ENCODE measurements at regions of chr12 and their contacts with region 1.

Region 1: GRCh38 chr12:5988659-5989116 is 43.6 kb upstream of the ANO2 start:
- DNase-seq: peak; percentile 43
- H3K4me3 ChIP-seq: no peak overlapping the region
- H3K27ac ChIP-seq: no peak overlapping the region
- H3K27me3 ChIP-seq: peaks cover 17% of the 10 kb centered on the region
- CTCF ChIP-seq: peak; percentile 99

Region 2: DNA sequence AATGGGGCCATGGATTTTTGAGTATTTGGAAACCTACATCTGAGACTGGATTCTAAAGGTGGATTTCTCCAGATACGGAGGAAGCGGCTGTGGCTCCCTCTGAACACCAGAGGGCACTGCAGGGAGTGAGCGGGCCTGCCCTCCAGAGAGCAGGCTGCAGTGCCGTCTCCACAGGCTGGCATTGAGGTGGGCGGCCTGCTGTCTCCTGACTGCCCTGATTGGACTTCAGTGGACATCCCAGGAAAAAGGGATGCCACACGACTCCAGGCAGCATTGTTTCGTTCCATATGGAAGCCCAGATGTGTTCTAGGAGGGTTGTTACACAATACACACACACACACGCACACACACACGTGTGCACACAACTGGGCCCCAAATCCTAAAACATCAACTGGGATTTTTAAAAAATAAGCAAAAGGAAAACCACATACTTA is 22.7 kb before region 1 on chr12:
- CTCF ChIA-PET with region 1: interaction called, 16 read pairs
- POLR2A ChIA-PET with region 1: no interaction called
- DNase-seq: peak; percentile 10
- H3K4me3 ChIP-seq: no peak overlapping the region
- H3K27ac ChIP-seq: no peak overlapping the region
- H3K27me3 ChIP-seq: peaks cover 14% of the 10 kb centered on the region
- CTCF ChIP-seq: peak; percentile 88

Region 3: DNA sequence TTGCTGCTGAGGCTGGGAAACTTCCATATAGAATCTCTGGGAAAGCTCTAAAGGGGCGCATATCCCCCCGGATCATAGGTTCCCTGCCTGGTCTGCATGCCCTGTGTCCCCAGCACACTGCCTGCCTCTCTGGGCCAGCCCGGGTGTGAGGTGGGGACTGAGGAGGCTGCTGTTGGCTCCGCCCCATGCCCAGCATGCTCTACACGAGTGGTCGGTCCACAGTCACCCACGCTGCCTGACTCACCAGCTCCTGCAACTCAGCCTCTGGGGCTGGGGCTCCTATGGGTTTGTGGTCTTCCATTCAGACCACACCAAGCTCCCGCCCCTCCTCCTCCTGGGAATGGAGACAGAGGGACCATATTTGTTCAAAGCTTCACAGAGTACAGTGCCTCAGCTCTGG is 44.9 kb after region 1 on chr12:
- CTCF ChIA-PET with region 1: interaction called, 295 read pairs
- POLR2A ChIA-PET with region 1: interaction called, 3 read pairs
- DNase-seq: no peak
- H3K4me3 ChIP-seq: no peak overlapping the region
- H3K27ac ChIP-seq: no peak overlapping the region
- H3K27me3 ChIP-seq: no peaks in the 10 kb centered on the region
- CTCF ChIP-seq: no peak

Region 4: DNA sequence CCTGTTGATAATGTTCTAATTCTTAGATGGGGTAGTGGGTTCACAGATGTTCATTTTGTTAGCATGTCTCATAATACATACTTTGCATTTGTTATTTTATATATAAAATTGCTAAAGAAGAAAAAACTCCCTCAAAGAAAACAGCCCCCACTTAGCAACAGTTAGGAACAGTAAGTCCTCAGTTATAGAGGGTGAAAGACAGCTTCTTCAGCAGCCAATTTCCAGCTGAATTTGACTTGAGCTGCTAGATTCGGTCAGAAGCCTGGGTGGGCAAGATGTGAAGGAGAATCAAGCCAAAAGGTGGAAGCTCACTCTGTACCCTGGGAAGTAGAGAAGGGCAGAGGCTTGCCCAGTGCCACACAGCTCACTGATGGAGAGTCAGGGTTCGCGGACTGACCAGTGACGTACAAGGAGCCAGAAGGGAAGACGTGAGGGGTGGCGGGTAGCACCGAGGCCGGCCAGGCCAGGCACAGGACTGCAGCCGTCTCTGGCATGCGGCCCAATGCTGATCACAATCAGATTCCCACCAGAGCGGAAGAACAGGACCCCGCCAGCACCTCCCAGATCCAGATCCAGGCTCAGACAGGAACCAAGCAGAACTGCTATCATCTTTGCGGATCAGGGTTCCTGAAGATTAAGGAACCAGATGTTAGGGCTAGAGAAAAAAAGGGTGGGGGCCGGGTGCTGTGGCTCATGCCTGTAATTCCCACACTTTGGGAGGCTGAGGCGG is 166.2 kb after region 1 on chr12:
- CTCF ChIA-PET with region 1: no interaction called
- POLR2A ChIA-PET with region 1: no interaction called
- DNase-seq: no peak
- H3K4me3 ChIP-seq: no peak overlapping the region
- H3K27ac ChIP-seq: no peak overlapping the region
- H3K27me3 ChIP-seq: no peaks in the 10 kb centered on the region
- CTCF ChIP-seq: no peak

Region 5: GRCh38 chr12:6278439-6279255 is 290.0 kb after region 1 on chr12:
- CTCF ChIA-PET with region 1: interaction called, 183 read pairs
- POLR2A ChIA-PET with region 1: no interaction called
- DNase-seq: no peak
- H3K4me3 ChIP-seq: peak overlapping the region; percentile 52
- H3K27ac ChIP-seq: no peak overlapping the region
- H3K27me3 ChIP-seq: no peaks in the 10 kb centered on the region
- CTCF ChIP-seq: peak; percentile 50

Region 6: DNA sequence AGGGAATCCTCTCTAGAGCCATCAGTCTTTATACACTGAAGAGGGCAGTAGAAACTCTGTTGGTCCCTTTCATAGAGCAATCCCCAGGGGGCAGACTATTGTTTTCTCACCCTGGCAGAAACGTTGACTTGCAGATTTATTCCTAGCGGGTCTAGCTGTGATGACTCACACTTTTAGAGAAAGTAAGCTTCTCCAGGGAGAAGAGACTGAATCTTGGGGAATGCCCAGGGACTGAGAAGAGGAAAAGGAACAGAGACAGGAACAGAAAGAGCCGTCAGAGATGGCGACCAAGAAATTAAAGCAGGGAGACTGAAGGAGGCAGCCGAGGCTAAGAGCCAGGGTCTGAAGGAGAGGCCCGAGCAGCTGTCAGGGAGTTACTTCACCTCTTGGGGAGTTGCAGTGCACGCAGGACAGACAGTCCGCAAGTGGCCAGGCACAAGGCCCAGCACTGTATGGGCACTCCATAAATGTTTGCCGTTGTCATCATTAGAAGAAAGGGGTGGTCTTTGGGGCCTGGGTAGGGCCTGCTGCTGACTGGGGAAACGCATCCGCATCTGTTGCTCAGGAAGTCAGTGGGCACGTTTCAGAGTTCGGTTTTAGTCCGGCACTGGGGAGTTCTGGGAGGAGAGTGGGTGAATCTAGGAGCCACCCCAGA is 334.8 kb after region 1 on chr12:
- CTCF ChIA-PET with region 1: interaction called, 12 read pairs
- POLR2A ChIA-PET with region 1: no interaction called
- DNase-seq: peak; percentile 79
- H3K4me3 ChIP-seq: no peak overlapping the region
- H3K27ac ChIP-seq: peak overlapping the region; percentile 90
- H3K27me3 ChIP-seq: no peaks in the 10 kb centered on the region
- CTCF ChIP-seq: peak; percentile 77